ENCODE measurements at regions of chr13 and their contacts with region 1.

Region 1: GRCh38 chr13:100235311-100235901 is 146.5 kb downstream of the PCCA start:
- DNase-seq: peak; percentile 55
- CTCF ChIP-seq: peak; percentile 61

Region 2: GRCh38 chr13:99656092-99656745 is 579.2 kb before region 1 on chr13:
- in situ Hi-C with region 1: loop called (anchors 25 kb)
- DNase-seq: peak; percentile 74
- CTCF ChIP-seq: peak; percentile 84

Region 3: DNA sequence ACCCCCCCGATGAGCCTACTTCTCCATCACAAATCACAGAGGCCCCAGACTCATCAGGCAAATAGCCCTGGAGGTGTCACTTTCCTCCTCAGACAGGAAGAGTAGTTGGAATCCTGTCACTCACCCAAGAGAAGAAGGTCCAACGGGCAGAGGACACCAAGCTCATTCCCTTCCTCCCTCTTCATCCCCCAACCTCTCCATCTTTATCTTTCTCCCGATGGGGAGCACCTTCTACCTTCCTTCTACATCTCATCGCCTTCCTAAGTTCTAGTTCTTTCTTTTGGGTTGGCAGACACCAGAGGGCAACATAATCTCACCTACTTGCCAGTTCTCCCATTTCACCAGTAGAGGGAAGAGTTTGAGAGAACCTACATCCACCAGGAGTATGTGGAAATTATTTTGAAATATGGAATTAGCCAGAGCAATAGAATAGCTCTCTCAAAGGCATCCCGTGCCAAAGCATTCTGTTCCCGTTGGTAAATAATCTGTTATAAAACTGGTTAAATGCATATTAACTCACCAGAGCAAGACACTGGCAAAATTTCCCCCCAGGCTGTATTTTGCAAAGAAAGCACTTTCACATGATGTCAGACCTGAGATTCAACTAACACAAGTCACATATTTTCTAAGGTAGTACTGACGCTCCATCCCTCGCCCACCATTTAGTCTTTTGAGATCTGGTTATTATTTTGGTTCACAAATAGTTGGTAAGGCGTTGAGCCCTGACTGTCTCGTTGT is 318.9 kb before region 1 on chr13:
- in situ Hi-C with region 1: loop called (anchors 25 kb)
- DNase-seq: peak; percentile 81
- CTCF ChIP-seq: peak; percentile 88

Region 4: GRCh38 chr13:99980201-99980823 is 255.1 kb before region 1 on chr13:
- in situ Hi-C with region 1: loop called (anchors 25 kb)
- DNase-seq: peak; percentile 88
- CTCF ChIP-seq: peak; percentile 9